WTC11 (cell line): ENCODE measurements at regions of chr1 and their contacts with region 1.

Region 1: GRCh38 chr1:72724951-72725861 is 442.9 kb upstream of the NEGR1 start:
- DNase-seq: peak; percentile 79
- ATAC-seq: peak; percentile 98
- H3K4me3 Mint-ChIP-seq: no peak overlapping the region
- H3K27ac Mint-ChIP-seq: no peak overlapping the region
- H3K4me1 Mint-ChIP-seq: peaks cover 11% of the 10 kb centered on the region
- H3K27me3 Mint-ChIP-seq: no peaks in the 10 kb centered on the region
- CTCF ChIP-seq: peak; percentile 66

Region 2: GRCh38 chr1:72763481-72763880 is 38.3 kb after region 1 on chr1:
- CTCF ChIA-PET with region 1: no interaction called
- POLR2A ChIA-PET with region 1: no interaction called
- DNase-seq: no peak
- ATAC-seq: no peak
- H3K4me3 Mint-ChIP-seq: no peak overlapping the region
- H3K27ac Mint-ChIP-seq: no peak overlapping the region
- H3K4me1 Mint-ChIP-seq: peaks cover 8% of the 10 kb centered on the region
- H3K27me3 Mint-ChIP-seq: no peaks in the 10 kb centered on the region
- CTCF ChIP-seq: no peak

Region 3: GRCh38 chr1:72845342-72845741 is 120.1 kb after region 1 on chr1:
- CTCF ChIA-PET with region 1: interaction called, 13 read pairs
- POLR2A ChIA-PET with region 1: no interaction called
- DNase-seq: peak; percentile 32
- ATAC-seq: peak; percentile 95
- H3K4me3 Mint-ChIP-seq: no peak overlapping the region
- H3K27ac Mint-ChIP-seq: no peak overlapping the region
- H3K4me1 Mint-ChIP-seq: peaks cover 41% of the 10 kb centered on the region
- H3K27me3 Mint-ChIP-seq: no peaks in the 10 kb centered on the region
- CTCF ChIP-seq: peak; percentile 22; the same call in 1 of the 2 replicates

Region 4: DNA sequence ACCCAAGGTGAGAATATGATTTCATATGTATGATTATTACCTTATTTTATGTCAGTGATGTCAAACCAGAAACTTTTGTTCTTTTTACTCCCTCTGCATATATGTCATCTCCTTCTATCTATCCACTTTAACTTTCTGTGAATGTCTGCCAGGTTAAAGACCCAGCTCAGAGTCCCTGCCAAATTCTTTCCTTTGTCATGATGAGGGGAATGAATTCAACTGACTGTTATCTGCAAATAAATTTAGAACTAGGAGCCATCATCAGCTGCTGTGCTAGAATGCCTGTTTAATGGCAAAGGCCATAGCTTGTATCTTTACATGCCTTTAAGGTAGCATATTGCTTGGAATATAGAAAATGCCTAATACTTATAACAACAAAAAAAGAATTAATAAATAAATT is 372.7 kb after region 1 on chr1:
- CTCF ChIA-PET with region 1: interaction called, 12 read pairs
- POLR2A ChIA-PET with region 1: no interaction called
- DNase-seq: no peak
- ATAC-seq: peak; percentile 83
- H3K4me3 Mint-ChIP-seq: no peak overlapping the region
- H3K27ac Mint-ChIP-seq: no peak overlapping the region
- H3K4me1 Mint-ChIP-seq: peaks cover 32% of the 10 kb centered on the region
- H3K27me3 Mint-ChIP-seq: no peaks in the 10 kb centered on the region
- CTCF ChIP-seq: no peak

Region 5: GRCh38 chr1:73205294-73205973 is 480.2 kb after region 1 on chr1:
- CTCF ChIA-PET with region 1: interaction called, 23 read pairs
- POLR2A ChIA-PET with region 1: no interaction called
- DNase-seq: peak; percentile 18
- ATAC-seq: peak; percentile 96
- H3K4me3 Mint-ChIP-seq: no peak overlapping the region
- H3K27ac Mint-ChIP-seq: no peak overlapping the region
- H3K4me1 Mint-ChIP-seq: peaks cover 13% of the 10 kb centered on the region
- H3K27me3 Mint-ChIP-seq: no peaks in the 10 kb centered on the region
- CTCF ChIP-seq: no peak; the same call in 1 of the 2 replicates